OCI-LY7 (cell line): ENCODE measurements at regions of chr17 and their contacts with region 1.

Region 1: DNA sequence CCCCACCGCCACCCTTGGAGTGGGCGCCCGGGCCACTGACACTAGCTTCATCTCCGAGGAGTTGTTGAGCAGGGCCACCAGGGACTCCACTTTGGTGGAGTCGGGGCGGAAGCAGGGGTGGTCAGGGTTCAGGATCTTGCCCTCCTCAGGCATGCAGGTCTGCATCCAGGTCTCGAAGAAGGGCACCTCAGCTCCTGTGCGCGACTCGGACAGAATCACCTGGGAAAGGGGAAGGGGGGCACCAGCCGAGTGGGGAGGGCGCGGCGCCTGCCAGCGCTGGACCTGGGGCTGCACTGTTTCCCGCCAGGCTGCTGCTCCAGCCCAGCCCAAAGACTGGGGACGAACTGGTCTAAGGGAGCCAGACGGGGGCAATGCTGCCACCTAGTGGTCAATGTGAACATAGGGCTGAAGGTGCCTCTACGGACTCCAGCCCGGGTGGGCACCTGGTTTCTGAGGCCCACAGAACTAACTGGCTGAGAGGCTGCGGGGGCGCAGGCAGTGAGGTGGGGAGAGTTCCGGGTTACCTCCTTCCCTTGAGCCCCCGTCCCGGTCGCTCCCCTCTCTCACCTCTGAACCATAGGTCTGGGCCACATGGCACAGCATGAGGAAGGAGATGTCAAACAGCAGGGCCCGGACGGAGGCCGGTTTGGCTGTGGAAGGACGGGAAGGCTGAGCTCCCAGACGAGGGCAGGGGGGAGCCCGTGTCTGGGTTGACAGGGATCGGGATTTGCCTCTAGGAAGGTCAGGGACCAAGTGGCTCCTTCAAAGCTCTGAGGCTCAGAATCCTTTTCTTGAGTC is 11.8 kb downstream of the CSF3 start:
- DNase-seq: peak; percentile 85
- H3K4me3 ChIP-seq: no peak overlapping the region
- H3K27ac ChIP-seq: no peak overlapping the region
- H3K4me1 ChIP-seq: no peaks in the 10 kb centered on the region
- CTCF ChIP-seq: peak; percentile 94

Region 2: DNA sequence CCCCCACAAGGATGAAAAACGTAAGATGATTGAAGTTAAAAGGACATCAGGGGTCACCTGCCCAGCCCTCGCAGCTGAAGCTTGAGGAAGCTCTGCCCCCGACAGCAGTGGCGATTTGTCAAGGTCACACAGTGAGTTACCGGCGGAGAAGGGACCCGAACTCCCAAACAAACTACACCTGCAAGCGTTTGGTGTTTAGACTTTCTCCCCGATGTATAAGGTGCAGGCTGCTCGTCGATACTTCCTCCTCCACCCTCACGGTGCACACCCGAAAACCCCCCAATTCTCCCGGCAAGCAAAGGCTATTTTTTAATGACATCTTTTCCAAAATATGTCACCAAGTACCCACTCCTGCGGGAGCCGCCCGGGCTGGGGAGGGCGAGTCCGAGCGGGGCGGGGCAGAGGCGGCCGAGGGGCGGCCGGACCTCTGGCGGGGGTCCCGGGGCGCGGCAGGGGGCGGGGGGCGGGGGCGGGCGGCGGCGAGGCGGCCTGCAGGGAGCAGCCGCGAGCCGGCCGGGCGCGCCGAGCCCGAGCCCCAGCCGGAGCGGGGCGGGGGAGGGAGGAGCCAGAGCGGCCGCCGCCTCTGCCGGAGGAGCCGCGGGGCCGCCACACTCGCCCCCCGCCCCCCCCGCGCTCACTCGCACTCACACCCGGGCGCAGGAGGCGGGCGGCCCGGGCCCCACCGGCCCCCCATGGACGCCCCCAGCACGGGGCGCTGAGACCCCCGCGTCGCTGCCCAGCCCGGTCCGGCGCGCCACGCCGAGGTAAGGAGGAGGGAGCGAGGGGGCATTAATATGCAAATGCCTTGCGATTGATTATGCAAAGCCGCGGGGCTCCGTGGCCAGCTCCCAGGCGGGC is 35.5 kb after region 1 on chr17 and contains the start of gene THRA:
- CTCF ChIA-PET with region 1: no interaction called
- POLR2A ChIA-PET with region 1: interaction called, 11 read pairs
- intact Hi-C with region 1: no loop called
- DNase-seq: peak; percentile 76
- H3K4me3 ChIP-seq: peak within 1 kb of the TSS; percentile 78
- H3K27ac ChIP-seq: no peak within 1 kb of the TSS
- H3K4me1 ChIP-seq: peaks cover 32% of the 10 kb centered on the region
- CTCF ChIP-seq: 0 out of 2 replicates have a peak, but pooled peaks have one; percentile 14
- total RNA-seq, gene THRA: 5.4 and 9.3 TPM in 2 replicates

Region 3: GRCh38 chr17:40075201-40075941 is 48.4 kb after region 1 on chr17:
- CTCF ChIA-PET with region 1: no interaction called
- POLR2A ChIA-PET with region 1: no interaction called
- intact Hi-C with region 1: loop called (anchors 5 kb)
- DNase-seq: peak; percentile 69
- H3K4me3 ChIP-seq: no peak overlapping the region
- H3K27ac ChIP-seq: no peak overlapping the region
- H3K4me1 ChIP-seq: peaks cover 16% of the 10 kb centered on the region
- CTCF ChIP-seq: peak; percentile 95